ENCODE measurements at regions of chr19 and their contacts with region 1.

Region 1: GRCh38 chr19:18117692-18118378 is 20.3 kb downstream of the MAST3 start:
- DNase-seq: peak; percentile 93
- H3K4me3 ChIP-seq: peak overlapping the region; percentile 65 to 82 (median 67)
- H3K27ac ChIP-seq: peak overlapping the region; percentile 75 to 83 (median 80)
- H3K4me1 ChIP-seq: peaks cover 0 to 23% (median 22%) of the 10 kb centered on the region in 4 donors
- H3K27me3 ChIP-seq: no peaks in the 10 kb centered on the region
- CTCF ChIP-seq: no peak
- EP300 ChIP-seq: no peak
- POLR2A ChIP-seq: no peak

Region 2: DNA sequence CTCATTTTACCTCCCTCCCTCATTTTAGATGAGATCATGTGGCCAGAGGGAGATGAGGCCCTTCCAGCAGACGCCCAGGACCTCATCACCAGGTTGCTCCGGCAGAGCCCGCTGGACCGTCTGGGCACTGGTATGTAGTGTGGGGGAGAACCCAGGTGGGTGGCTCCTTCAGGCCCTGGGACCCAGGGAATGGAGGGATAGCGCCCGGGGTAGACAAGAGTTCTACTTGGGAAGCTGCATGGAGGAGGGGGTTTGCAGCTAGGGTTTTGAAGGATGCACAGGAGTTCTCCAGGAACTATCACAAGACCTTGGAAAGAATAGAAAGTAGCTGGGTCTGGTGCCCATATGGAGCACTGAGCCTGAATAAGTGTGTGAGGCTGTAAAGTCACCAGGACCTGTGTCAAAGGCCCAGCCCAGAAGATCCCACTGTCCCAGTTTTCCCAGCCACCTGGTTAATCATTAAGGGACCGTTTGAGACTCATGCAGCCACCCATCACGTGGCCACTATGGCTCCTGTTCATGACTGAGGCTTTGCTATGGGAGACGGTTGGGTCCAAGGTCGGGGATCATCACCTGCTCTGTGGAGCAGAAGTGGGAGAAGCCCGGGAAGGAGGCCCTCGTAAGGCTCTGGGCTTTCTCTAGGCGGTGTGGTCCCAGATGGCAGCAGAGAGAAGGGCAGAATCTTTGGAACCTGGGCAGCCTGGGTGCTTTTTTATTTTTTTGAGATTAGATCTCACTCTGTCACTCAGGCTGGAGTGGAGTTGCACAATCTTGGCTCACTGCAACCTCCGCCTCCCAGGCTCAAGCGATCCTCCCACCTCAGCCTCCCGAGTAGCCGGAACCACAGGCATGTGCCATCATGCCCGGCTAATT is 18.1 kb after region 1 on chr19:
- intact Hi-C with region 1: no loop called
- DNase-seq: no peak
- H3K4me3 ChIP-seq: no peak overlapping the region
- H3K27ac ChIP-seq: no peak overlapping the region
- H3K4me1 ChIP-seq: no peaks in the 10 kb centered on the region
- H3K27me3 ChIP-seq: no peaks in the 10 kb centered on the region
- CTCF ChIP-seq: no peak
- EP300 ChIP-seq: no peak
- POLR2A ChIP-seq: no peak

Region 3: DNA sequence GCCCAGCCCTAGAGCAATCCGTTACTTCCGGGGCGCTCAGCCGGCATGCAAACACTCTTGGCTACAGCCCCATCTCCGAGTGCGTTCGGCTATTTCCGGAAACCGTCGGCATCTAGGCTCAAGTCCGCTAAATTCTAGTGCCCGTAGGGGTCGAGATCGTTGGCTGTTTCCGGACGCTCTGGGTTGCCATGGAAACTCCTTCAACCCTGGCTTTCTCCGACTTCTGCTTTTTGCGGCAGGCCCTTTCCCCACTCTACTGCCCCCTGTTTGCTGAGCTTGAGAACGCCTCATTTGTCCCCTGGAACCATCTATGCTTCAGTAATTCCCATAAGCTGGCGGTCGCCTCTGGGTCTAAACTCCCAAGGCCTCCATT is 34.6 kb after region 1 on chr19:
- intact Hi-C with region 1: loop called (anchors 2 kb)
- DNase-seq: peak; percentile 98
- H3K4me3 ChIP-seq: peak overlapping the region; percentile 41 to 94 (median 85)
- H3K27ac ChIP-seq: peak overlapping the region; percentile 87 to 98 (median 95)
- H3K4me1 ChIP-seq: peaks cover 0 to 49% (median 43%) of the 10 kb centered on the region in 4 donors
- H3K27me3 ChIP-seq: no peaks in the 10 kb centered on the region
- CTCF ChIP-seq: peak; percentile 52 to 74 (median 60)
- EP300 ChIP-seq: no peak
- POLR2A ChIP-seq: no peak

Region 4: DNA sequence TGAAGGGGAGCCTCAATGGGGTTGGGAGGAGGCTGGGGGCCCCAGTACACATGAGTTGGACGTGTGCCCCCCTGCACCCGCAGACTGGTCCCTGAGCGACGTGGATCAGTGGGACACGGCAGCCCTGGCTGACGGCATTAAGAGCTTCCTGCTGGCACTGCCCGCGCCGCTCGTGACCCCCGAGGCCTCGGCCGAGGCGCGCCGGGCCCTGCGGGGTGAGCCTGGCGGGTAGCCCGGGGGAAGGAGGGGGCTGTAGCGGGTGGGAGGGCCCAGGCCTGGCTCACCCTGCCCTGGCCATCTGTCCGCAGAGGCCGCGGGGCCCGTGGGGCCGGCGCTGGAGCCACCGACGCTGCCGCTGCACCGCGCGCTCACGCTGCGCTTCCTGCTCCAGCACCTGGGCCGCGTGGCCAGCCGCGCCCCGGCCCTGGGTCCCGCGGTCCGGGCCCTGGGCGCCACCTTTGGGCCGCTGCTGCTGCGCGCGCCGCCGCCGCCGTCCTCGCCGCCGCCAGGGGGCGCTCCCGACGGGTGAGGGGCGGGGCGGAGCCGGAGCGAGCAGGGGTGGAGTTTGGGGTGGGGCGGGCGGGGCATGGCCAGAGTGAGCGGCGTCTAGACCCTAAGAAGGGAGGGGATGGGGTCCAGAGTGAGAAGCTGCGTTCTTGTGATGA is 43.3 kb after region 1 on chr19:
- intact Hi-C with region 1: loop called (anchors 2 kb)
- DNase-seq: peak; percentile 83
- H3K4me3 ChIP-seq: peak overlapping the region in 3 of 4 donors; percentile 40 to 52 (median 50)
- H3K27ac ChIP-seq: peak overlapping the region; percentile 71 to 77 (median 74)
- H3K4me1 ChIP-seq: peaks cover 0 to 36% (median 35%) of the 10 kb centered on the region in 4 donors
- H3K27me3 ChIP-seq: no peaks in the 10 kb centered on the region
- CTCF ChIP-seq: peak in 1 of 4 experiments; percentile 61
- EP300 ChIP-seq: no peak
- POLR2A ChIP-seq: no peak

Region 5: GRCh38 chr19:18167975-18168645 is 50.3 kb after region 1 on chr19:
- intact Hi-C with region 1: loop called (anchors 2 kb)
- DNase-seq: no peak
- H3K4me3 ChIP-seq: no peak overlapping the region
- H3K27ac ChIP-seq: no peak overlapping the region
- H3K4me1 ChIP-seq: peaks cover 0 to 3% (median 1%) of the 10 kb centered on the region in 4 donors
- H3K27me3 ChIP-seq: no peaks in the 10 kb centered on the region
- CTCF ChIP-seq: peak; percentile 46 to 72 (median 64)
- EP300 ChIP-seq: no peak
- POLR2A ChIP-seq: no peak

Region 6: DNA sequence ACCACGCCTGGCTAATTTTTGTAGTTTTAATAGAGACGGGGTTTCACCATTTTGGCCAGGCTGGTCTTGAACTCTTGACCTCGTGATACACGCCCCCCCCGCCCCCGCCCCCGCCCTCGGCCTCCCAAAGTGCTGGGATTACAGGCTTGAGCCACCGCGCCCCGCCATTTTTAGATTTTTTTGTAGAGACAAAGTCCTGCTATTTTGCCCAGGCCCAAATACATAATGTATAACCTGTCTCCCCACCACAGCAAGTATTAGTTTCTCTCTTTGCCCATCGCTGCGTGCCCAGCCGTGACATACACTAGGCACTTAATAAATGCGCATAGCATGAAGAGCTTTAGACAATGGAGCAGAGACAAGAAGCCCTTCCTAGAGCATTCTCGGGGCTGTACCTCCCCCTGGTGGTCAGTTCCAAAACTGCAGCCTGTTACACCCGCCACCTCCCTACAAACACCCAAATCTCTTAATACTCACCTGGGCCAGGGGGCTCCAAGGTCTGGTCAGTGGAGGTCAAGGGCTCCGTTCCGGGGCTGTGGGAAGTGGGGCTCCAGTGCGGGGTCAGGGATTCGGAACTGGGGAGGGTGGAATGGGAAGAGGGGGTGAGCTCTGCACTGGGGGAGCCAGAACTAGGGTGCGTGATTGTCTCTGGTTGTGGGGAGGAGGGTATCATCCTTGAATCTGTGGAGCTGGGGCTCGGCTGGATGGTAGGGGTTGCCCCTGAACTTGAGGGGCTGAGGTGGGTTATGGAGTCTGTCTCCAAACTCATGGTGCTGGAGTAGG is 133.9 kb after region 1 on chr19:
- intact Hi-C with region 1: loop called (anchors 2 kb)
- DNase-seq: peak; percentile 85
- H3K4me3 ChIP-seq: no peak overlapping the region
- H3K27ac ChIP-seq: no peak overlapping the region
- H3K4me1 ChIP-seq: peaks cover 0 to 5% (median 2%) of the 10 kb centered on the region in 4 donors
- H3K27me3 ChIP-seq: peaks cover 0 to 13% (median 5%) of the 10 kb centered on the region in 3 donors
- CTCF ChIP-seq: peak; percentile 90 to 99 (median 96)
- EP300 ChIP-seq: no peak
- POLR2A ChIP-seq: no peak

Region 7: GRCh38 chr19:18279516-18280273 is 161.9 kb after region 1 on chr19:
- intact Hi-C with region 1: no loop called
- DNase-seq: peak; percentile 97
- H3K4me3 ChIP-seq: peak overlapping the region; percentile 77 to 98 (median 97)
- H3K27ac ChIP-seq: peak overlapping the region; percentile 97 to 100 (median 100)
- H3K4me1 ChIP-seq: peaks cover 0 to 61% (median 57%) of the 10 kb centered on the region in 4 donors
- H3K27me3 ChIP-seq: no peaks in the 10 kb centered on the region
- CTCF ChIP-seq: peak; percentile 71 to 94 (median 82)
- EP300 ChIP-seq: no peak
- POLR2A ChIP-seq: peak; percentile 89 to 92

Region 8: GRCh38 chr19:18419195-18419698 is 301.4 kb after region 1 on chr19 and contains the start of gene SSBP4:
- intact Hi-C with region 1: loop called (anchors 10 kb)
- DNase-seq: no peak
- H3K4me3 ChIP-seq: peak within 1 kb of the TSS; percentile 41 to 74 (median 64)
- H3K27ac ChIP-seq: peak within 1 kb of the TSS; percentile 82 to 88 (median 86)
- H3K4me1 ChIP-seq: peaks cover 0 to 79% (median 69%) of the 10 kb centered on the region in 4 donors
- H3K27me3 ChIP-seq: peaks cover 0 to 29% (median 3%) of the 10 kb centered on the region in 3 donors
- CTCF ChIP-seq: peak in 1 of 4 experiments; percentile 14
- EP300 ChIP-seq: no peak
- POLR2A ChIP-seq: no peak
- total RNA-seq, gene SSBP4: 52.4 to 71.4 (median 58.0) TPM

Measured in sigmoid colon (tissue), 7 donors.